Sigmoid colon (tissue), 7 donors: ENCODE measurements at regions of chr2 and their contacts with region 1.

Region 1: GRCh38 chr2:202634556-202635427 is at the start of gene FAM117B:
- DNase-seq: peak; percentile 99
- H3K4me3 ChIP-seq: peak within 1 kb of the TSS; percentile 96 to 100 (median 99)
- H3K27ac ChIP-seq: peak within 1 kb of the TSS; percentile 90 to 96 (median 91)
- H3K4me1 ChIP-seq: peaks cover 0 to 11% (median 5%) of the 10 kb centered on the region in 4 donors
- H3K27me3 ChIP-seq: no peaks in the 10 kb centered on the region
- CTCF ChIP-seq: no peak
- EP300 ChIP-seq: peak in 1 of 4 donors; percentile 36
- POLR2A ChIP-seq: peak; percentile 25 to 85
- total RNA-seq, gene FAM117B: 3.7 to 8.9 (median 6.2) TPM

Region 2: DNA sequence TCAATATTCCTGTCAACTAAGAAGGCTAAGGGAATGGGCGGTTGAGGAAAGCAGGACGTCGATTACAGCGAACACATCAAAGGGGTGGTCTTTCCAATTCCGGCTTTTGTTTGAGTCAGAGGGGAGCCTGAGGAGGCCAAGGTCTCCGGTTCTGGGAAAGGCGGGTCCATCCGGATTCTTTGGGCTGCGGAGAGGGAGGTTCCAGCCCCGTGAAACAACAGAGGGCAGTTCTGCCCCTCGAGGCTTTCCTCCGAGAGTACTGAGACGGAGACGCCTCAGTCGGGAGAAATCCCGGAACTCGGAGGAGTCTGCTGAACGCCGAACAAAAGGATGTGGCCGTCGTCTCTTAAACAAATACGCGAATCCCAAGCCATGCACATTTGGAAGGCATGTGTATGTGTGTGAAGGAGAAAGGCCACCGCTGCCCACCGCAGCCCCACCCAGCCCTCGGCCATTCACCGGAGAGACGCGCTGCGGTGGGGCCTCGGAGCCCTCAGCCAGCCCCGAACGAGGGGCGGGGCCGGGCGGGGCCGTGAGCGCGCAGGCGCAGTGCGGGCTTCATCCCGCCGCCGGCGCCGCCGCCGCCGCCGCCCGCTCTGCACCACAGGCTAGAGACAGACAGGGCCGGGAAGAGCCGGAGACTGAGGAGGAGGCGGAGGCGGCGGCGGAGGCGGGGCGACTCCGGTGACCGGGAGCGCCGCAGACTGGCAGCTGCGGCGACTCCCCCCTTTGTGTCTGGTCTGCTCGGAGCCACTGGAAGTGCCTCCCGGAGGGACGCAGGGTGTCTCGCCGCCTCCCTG is 259.0 kb before region 1 on chr2 and contains the start of gene BMPR2:
- intact Hi-C with region 1: loop called (anchors 10 kb)
- DNase-seq: peak; percentile 94
- H3K4me3 ChIP-seq: peak within 1 kb of the TSS; percentile 84 to 98 (median 92)
- H3K27ac ChIP-seq: peak within 1 kb of the TSS; percentile 97 to 99 (median 98)
- H3K4me1 ChIP-seq: peaks cover 0 to 33% (median 20%) of the 10 kb centered on the region in 4 donors
- H3K27me3 ChIP-seq: no peaks in the 10 kb centered on the region
- CTCF ChIP-seq: no peak
- EP300 ChIP-seq: peak in 2 of 4 donors; percentile 12 to 21
- POLR2A ChIP-seq: peak; percentile 73 to 78
- total RNA-seq, gene BMPR2: 49.9 to 74.9 (median 63.3) TPM

Region 3: DNA sequence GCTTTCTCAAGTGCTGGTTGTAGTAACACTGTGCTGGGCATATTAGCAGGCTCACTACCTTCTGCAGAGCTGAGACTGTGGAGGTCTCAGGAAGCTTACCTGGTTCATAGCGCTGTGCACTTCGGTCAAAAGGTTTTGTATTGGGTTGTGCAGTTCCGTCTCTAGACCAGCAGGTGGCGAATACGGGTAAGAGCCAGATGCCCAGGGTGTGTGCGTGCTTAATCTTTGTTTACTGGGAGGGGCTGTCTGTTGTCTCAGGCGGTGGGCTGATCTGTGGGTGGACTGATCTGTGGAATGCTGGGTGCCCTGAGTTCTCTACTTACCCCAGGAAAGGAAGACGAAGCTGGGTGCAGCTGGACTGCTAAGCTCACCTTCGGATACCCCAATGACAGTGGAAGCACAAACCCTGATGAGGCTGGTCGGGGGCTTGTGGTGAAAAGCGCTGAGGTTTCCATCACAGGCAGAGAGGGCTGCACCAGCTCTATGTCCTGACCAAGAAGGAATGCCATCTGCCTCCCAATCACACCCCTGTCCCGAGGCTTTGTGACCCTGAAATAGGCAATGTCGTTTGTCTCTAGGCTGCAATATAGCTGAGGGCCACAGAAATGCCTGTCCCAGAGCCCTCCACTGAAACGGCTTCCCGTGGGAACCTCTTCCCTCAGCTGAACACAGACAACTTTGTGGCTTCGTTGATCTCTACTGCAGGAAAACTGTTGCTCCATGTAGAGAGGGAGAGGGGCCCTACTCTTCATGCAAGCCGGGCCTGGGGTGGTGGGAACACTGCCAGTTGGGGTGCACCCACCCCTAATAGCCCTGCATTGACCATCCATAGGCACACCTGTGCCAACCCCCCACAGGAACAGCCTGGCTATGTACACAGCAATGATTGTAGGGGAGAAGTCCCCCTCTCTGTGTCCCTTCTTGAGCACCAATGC is 45.9 kb before region 1 on chr2:
- intact Hi-C with region 1: loop called (anchors 2 kb)
- DNase-seq: peak; percentile 86
- H3K4me3 ChIP-seq: peak overlapping the region in 3 of 4 donors; percentile 5 to 17 (median 13)
- H3K27ac ChIP-seq: no peak overlapping the region
- H3K4me1 ChIP-seq: peaks cover 0 to 9% (median 8%) of the 10 kb centered on the region in 4 donors
- H3K27me3 ChIP-seq: no peaks in the 10 kb centered on the region
- CTCF ChIP-seq: peak; percentile 69 to 96 (median 92)
- EP300 ChIP-seq: no peak
- POLR2A ChIP-seq: no peak

Region 4: GRCh38 chr2:202801544-202801943 is 166.8 kb after region 1 on chr2:
- intact Hi-C with region 1: loop called (anchors 10 kb)
- DNase-seq: no peak
- H3K4me3 ChIP-seq: no peak overlapping the region
- H3K27ac ChIP-seq: no peak overlapping the region
- H3K4me1 ChIP-seq: peaks cover 0 to 13% (median 0%) of the 10 kb centered on the region in 4 donors
- H3K27me3 ChIP-seq: no peaks in the 10 kb centered on the region
- CTCF ChIP-seq: no peak
- EP300 ChIP-seq: no peak
- POLR2A ChIP-seq: no peak

Region 5: GRCh38 chr2:202911512-202912341 is 276.9 kb after region 1 on chr2 and contains the starts of genes CARF and WDR12:
- intact Hi-C with region 1: loop called (anchors 2 kb)
- DNase-seq: peak; percentile 96
- H3K4me3 ChIP-seq: peak within 1 kb of the TSS; percentile 55 to 78 (median 62)
- H3K27ac ChIP-seq: peak within 1 kb of the TSS; percentile 83 to 88 (median 86)
- H3K4me1 ChIP-seq: peaks cover 0 to 29% (median 18%) of the 10 kb centered on the region in 4 donors
- H3K27me3 ChIP-seq: no peaks in the 10 kb centered on the region
- CTCF ChIP-seq: no peak
- EP300 ChIP-seq: no peak
- POLR2A ChIP-seq: peak; percentile 53 to 55
- total RNA-seq, gene CARF: 15.9 to 23.5 (median 18.9) TPM
- total RNA-seq, gene WDR12: 3.3 to 23.0 (median 10.9) TPM

Region 6: GRCh38 chr2:203014456-203015199 is 379.8 kb after region 1 on chr2 and contains the start of gene NBEAL1:
- intact Hi-C with region 1: loop called (anchors 5 kb)
- DNase-seq: peak; percentile 99
- H3K4me3 ChIP-seq: peak within 1 kb of the TSS; percentile 82 to 92 (median 87)
- H3K27ac ChIP-seq: peak within 1 kb of the TSS; percentile 84 to 96 (median 95)
- H3K4me1 ChIP-seq: peaks cover 0 to 46% (median 28%) of the 10 kb centered on the region in 4 donors
- H3K27me3 ChIP-seq: no peaks in the 10 kb centered on the region
- CTCF ChIP-seq: no peak
- EP300 ChIP-seq: peak in 2 of 4 donors; percentile 66 to 67
- POLR2A ChIP-seq: peak; percentile 85 to 87
- total RNA-seq, gene NBEAL1: 22.7 to 39.1 (median 25.8) TPM